HEK293 (cell line): ENCODE measurements at regions of chr7 and their contacts with region 1.

Region 1: DNA sequence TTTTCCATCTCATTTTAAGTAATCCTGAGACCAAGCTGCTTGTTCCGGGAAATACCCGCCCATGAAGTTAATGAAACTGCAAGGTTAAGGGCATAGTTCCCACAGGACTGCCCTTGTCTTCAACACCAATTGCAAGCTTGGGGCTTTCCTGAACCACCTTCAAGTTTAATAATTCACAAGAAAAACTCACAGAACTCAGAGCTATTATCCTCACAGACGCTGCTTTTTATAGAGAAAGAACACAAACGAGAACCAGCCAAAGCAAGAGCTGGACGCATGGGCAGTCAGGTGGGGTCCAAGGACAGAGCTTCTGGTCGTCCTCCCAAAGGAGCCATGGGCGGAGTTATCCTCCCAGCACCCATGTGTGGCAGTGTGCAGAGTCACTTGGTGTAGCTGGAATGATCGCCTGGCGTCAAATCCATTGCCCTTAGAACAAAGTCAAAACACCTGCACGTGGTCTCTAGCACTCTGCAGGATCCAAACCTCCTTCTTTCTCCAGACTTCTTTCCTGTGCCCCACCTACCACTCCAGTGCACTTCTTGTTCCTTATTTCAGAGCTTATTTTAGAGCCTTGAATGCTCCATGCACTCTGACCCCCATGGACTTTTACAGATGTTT is 56.7 kb downstream of the SNX10 start:
- H3K4me3 ChIP-seq: no peak overlapping the region
- H3K27ac ChIP-seq: no peak overlapping the region
- H3K4me1 ChIP-seq: no peaks in the 10 kb centered on the region
- CTCF ChIP-seq: no peak

Region 2: DNA sequence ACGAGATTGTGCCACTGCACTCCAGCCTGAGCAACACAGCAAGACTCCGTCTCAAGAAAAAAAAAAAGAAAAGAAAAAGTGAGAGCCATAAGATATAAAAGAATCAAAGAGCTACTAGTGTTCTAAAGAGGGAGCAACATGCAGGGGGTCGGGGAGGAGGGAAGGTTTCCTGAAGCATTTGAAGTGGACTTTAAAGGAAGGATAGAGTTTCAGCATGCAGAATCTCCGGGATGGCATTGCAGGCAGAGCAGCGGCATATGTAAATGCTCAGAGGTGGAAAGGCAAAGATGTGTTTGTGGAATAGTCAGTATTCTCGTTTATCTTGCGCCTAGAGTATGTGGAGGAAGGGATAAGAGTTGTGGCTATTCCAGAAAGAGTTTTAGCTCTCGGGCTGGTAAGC is 643.9 kb before region 1 on chr7:
- CTCF ChIA-PET with region 1: no interaction called
- POLR2A ChIA-PET with region 1: interaction called, 10 read pairs
- H3K4me3 ChIP-seq: no peak overlapping the region
- H3K27ac ChIP-seq: no peak overlapping the region
- H3K4me1 ChIP-seq: no peaks in the 10 kb centered on the region
- CTCF ChIP-seq: no peak

Region 3: DNA sequence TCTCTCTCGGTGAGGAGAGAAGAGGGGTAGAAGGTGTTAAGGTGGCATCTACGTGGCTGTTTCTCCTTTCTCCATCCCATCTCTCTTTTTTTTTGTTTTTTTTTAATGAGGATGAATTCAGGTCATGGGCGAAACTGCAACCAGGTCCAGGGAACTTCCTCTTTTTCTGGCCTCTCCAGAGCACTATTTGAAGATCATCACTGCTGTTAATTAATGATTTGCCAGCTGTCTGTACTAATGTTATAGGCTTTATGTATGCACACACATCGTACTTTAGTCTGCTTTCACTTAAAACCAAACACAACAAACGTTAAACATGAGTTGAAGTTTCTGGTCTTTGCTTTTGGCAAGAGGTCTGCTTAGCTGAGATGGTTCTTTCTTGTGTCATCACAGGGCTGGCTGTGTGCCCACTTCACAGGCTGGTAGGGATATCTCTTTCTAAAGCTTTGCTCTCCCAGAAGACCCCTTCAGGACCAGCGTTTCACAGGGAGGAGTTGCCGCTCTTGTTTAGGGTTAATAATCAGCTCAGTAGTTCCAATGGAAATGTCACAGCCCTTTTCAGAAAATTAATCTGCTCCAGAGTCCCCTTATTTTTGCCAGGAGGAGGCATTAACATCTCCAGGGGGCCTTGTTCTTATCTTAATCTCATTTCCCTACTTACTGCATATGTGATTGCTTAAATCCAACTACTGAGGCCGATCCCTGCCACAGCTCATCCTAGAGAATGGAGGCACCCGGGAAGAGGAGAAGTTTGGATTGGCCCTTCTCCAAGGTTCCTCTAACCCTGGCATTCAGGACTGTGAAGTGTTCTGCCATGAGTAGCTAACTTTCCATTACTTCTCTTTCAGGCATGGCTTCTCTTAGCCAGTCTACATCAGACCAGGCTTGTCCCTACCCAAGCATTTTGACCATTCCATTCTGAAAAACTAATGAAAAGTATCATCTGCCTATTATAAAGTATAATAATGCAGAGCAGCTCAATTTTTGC is 470.2 kb before region 1 on chr7:
- CTCF ChIA-PET with region 1: no interaction called
- POLR2A ChIA-PET with region 1: interaction called, 10 read pairs
- H3K4me3 ChIP-seq: no peak overlapping the region
- H3K27ac ChIP-seq: peak overlapping the region; percentile 47; the same call in 1 of the 2 replicates
- H3K4me1 ChIP-seq: peaks cover 32% of the 10 kb centered on the region
- CTCF ChIP-seq: no peak